CD8-positive, alpha-beta T cell (primary cell): ENCODE measurements at regions of chr19 and their contacts with region 1.

Region 1: GRCh38 chr19:12736995-12737834 is at the start of gene GET3:
- DNase-seq: peak; percentile 59 to 94 (median 82)
- ATAC-seq: peak; percentile 78
- H3K4me3 ChIP-seq: peak within 1 kb of the TSS; percentile 70 to 81
- H3K4me3 Mint-ChIP-seq: peak within 1 kb of the TSS; percentile 99
- H3K27ac ChIP-seq: peak within 1 kb of the TSS; percentile 70 to 87
- H3K27ac Mint-ChIP-seq: peak within 1 kb of the TSS; percentile 92
- H3K4me1 ChIP-seq: peaks cover 39% of the 10 kb centered on the region
- H3K4me1 Mint-ChIP-seq: peaks cover 41% of the 10 kb centered on the region
- H3K27me3 ChIP-seq: no peaks in the 10 kb centered on the region
- H3K27me3 Mint-ChIP-seq: no peaks in the 10 kb centered on the region
- CTCF ChIP-seq: no peak
- total RNA-seq, gene GET3: 17.6 to 19.8 TPM

Region 2: GRCh38 chr19:12666265-12667048 is 70.8 kb before region 1 on chr19 and contains the starts of genes MAN2B1 and WDR83:
- CTCF ChIA-PET with region 1: no interaction called
- POLR2A ChIA-PET with region 1: no interaction called
- intact Hi-C with region 1: loop called in 1 of 2 experiments (anchors 5 kb)
- DNase-seq: peak; percentile 57 to 92 (median 77)
- ATAC-seq: peak; percentile 72
- H3K4me3 ChIP-seq: peak within 1 kb of the TSS; percentile 82 to 84
- H3K4me3 Mint-ChIP-seq: peak within 1 kb of the TSS; percentile 90
- H3K27ac ChIP-seq: peak within 1 kb of the TSS; percentile 69 to 99
- H3K27ac Mint-ChIP-seq: peak within 1 kb of the TSS; percentile 94
- H3K4me1 ChIP-seq: peaks cover 46% of the 10 kb centered on the region
- H3K4me1 Mint-ChIP-seq: peaks cover 54% of the 10 kb centered on the region
- H3K27me3 ChIP-seq: no peaks in the 10 kb centered on the region
- H3K27me3 Mint-ChIP-seq: no peaks in the 10 kb centered on the region
- CTCF ChIP-seq: no peak
- total RNA-seq, gene MAN2B1: 74.8 to 82.2 TPM
- total RNA-seq, gene WDR83: 7.4 to 10.0 TPM

Region 3: DNA sequence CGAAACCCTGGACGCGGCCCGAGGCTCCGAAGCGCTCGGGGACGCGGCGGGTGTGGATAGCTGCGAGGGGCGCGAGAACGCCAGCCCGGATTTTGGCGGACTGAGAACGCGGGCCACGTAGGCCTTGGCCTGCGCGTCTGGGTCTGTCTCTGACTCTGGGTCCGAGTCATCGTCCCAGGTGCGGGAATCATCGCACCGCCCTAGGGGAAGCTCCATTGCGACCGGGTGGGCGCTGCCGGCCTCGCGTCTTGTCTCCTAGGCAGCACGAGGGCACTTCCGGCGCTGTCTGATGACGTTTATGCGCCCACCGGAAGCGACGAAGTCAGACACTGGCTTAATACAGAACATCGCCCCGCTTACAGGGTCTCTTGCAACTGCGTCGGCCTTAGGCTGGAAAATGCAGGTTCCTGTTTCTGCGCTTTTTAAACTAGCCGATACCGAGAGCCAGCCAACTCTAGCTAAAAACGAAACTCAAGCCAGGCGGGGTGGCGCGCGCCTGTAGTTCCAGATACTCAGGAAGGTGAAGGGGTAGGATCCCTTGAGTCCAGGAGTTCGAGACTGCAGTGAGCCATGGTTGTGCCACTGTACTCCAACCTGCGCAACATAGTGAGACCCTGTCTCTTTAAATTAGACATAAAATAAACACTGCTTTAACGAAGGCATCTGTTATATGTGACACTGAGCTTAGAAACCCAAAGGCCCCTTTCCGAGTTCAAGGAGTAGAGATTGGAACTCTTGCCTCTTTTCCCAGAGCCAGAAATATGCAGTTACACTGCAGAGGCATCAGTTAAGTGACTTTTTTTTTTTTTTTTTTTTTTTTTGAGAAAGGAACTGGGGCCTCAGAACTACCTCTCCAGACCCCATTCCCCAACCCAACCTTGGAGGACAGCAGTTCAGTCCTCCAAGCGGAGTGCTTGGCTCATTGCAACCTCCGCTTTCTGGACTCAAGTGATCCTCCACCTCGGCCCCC is 40.6 kb before region 1 on chr19 and contains the start of gene FBXW9:
- CTCF ChIA-PET with region 1: no interaction called
- POLR2A ChIA-PET with region 1: interaction called, 6 read pairs
- intact Hi-C with region 1: loop called in 1 of 2 experiments (anchors 1 kb)
- DNase-seq: peak; percentile 95 to 99 (median 98)
- ATAC-seq: peak; percentile 92
- H3K4me3 ChIP-seq: peak within 1 kb of the TSS; percentile 88 to 89
- H3K4me3 Mint-ChIP-seq: peak within 1 kb of the TSS; percentile 90
- H3K27ac ChIP-seq: peak within 1 kb of the TSS; percentile 87 to 91
- H3K27ac Mint-ChIP-seq: peak within 1 kb of the TSS; percentile 97
- H3K4me1 ChIP-seq: peaks cover 14% of the 10 kb centered on the region
- H3K4me1 Mint-ChIP-seq: peaks cover 11% of the 10 kb centered on the region
- H3K27me3 ChIP-seq: no peaks in the 10 kb centered on the region
- H3K27me3 Mint-ChIP-seq: no peaks in the 10 kb centered on the region
- CTCF ChIP-seq: no peak
- total RNA-seq, gene FBXW9: 2.3 to 2.8 TPM

Region 4: GRCh38 chr19:12757544-12758274 is 20.5 kb after region 1 on chr19:
- CTCF ChIA-PET with region 1: interaction called, 126 read pairs
- POLR2A ChIA-PET with region 1: interaction called, 3 read pairs
- intact Hi-C with region 1: loop called in 1 of 2 experiments (anchors 1 kb)
- DNase-seq: peak; percentile 32 to 74 (median 49)
- ATAC-seq: peak; percentile 78
- H3K4me3 ChIP-seq: no peak overlapping the region
- H3K4me3 Mint-ChIP-seq: peak overlapping the region; percentile 18
- H3K27ac ChIP-seq: no peak overlapping the region
- H3K27ac Mint-ChIP-seq: no peak overlapping the region
- H3K4me1 ChIP-seq: peaks cover 7% of the 10 kb centered on the region
- H3K4me1 Mint-ChIP-seq: peaks cover 6% of the 10 kb centered on the region
- H3K27me3 ChIP-seq: peaks cover 3 to 4% of the 10 kb centered on the region in 2 experiments
- H3K27me3 Mint-ChIP-seq: peaks cover 16% of the 10 kb centered on the region
- CTCF ChIP-seq: peak; percentile 93

Region 5: DNA sequence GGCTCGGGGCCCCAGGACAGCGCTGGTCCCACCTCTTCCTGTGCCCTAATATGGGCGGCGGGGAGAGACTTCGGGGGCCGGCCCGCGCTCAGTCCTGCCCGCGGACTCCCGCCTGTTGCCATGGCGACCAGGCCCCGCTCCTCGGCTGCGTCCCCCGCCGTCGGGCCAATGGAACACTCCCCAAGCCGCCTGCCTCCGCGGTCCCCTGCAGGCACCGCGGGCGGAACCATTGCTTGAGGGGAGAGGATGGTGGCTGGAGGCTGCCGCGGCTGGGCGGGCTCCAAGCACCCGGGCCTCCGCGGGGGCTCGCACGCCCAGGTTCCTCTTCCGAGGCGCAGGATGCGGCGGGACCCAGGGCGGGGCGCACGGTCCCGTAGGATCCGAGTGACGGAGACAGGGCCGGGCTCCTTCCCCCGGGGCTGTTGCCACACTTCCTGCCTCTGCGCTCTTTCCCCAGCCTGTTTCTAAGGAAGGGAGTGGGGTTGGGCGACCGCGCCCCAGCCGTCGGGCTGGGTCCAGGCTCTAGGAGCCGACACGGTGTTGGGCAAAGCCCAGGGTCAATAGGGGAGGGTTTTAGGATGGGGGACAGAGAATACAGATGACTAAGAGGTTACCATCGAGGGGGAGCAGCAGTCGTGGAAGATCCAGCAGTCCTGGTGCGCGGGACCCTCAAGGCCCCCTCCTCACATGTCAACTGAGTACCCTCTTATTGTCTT is 52.8 kb after region 1 on chr19:
- CTCF ChIA-PET with region 1: interaction called, 12 read pairs
- POLR2A ChIA-PET with region 1: interaction called, 27 read pairs
- intact Hi-C with region 1: loop called in 1 of 2 experiments (anchors 1 kb)
- DNase-seq: peak; percentile 84 to 98 (median 91)
- ATAC-seq: peak; percentile 29
- H3K4me3 ChIP-seq: peak overlapping the region; percentile 86 to 100
- H3K4me3 Mint-ChIP-seq: peak overlapping the region; percentile 93
- H3K27ac ChIP-seq: peak overlapping the region; percentile 100
- H3K27ac Mint-ChIP-seq: peak overlapping the region; percentile 97
- H3K4me1 ChIP-seq: peaks cover 47% of the 10 kb centered on the region
- H3K4me1 Mint-ChIP-seq: peaks cover 37% of the 10 kb centered on the region
- H3K27me3 ChIP-seq: no peaks in the 10 kb centered on the region
- H3K27me3 Mint-ChIP-seq: no peaks in the 10 kb centered on the region
- CTCF ChIP-seq: no peak

Region 6: GRCh38 chr19:12806239-12807081 is 69.2 kb after region 1 on chr19 and contains the start of gene RNASEH2A:
- CTCF ChIA-PET with region 1: interaction called, 3 read pairs
- POLR2A ChIA-PET with region 1: interaction called, 4 read pairs
- intact Hi-C with region 1: loop called (anchors 1 kb)
- DNase-seq: peak; percentile 66 to 93 (median 85)
- ATAC-seq: peak; percentile 92
- H3K4me3 ChIP-seq: peak within 1 kb of the TSS; percentile 60 to 68
- H3K4me3 Mint-ChIP-seq: peak within 1 kb of the TSS; percentile 92
- H3K27ac ChIP-seq: peak within 1 kb of the TSS; percentile 54 to 63
- H3K27ac Mint-ChIP-seq: peak within 1 kb of the TSS; percentile 78
- H3K4me1 ChIP-seq: peaks cover 18% of the 10 kb centered on the region
- H3K4me1 Mint-ChIP-seq: peaks cover 26% of the 10 kb centered on the region
- H3K27me3 ChIP-seq: no peaks in the 10 kb centered on the region
- H3K27me3 Mint-ChIP-seq: no peaks in the 10 kb centered on the region
- CTCF ChIP-seq: no peak
- total RNA-seq, gene RNASEH2A: 1.3 to 2.2 TPM

Region 7: DNA sequence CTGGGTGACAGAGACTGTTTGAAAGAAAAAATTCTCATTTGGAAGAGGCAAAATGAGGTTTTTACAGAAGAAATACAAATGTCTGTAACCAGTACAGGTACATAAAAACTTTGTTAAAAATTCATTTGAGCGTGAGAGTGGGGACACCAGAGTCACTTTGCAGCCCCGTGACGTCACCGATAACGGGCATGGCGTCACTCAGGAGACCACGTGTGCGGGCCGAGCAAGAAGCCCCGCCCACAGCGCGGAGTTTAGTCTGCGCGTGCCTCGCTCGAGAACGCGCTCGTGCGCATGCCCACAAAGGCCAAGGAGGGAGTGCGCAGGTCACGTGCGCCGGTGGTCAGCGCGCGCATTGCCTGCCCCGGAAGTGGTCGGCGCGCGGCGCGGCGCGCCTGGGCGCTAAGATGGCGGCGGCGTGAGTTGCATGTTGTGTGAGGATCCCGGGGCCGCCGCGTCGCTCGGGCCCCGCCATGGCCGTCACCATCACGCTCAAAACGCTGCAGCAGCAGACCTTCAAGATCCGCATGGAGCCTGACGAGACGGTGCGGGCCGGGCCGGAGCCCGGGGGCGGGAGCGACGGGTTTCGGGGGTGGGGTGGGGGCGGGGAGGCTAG is 208.4 kb after region 1 on chr19 and contains the start of gene RAD23A:
- CTCF ChIA-PET with region 1: no interaction called
- POLR2A ChIA-PET with region 1: no interaction called
- intact Hi-C with region 1: loop called in 1 of 2 experiments (anchors 1 kb)
- DNase-seq: peak; percentile 97 to 100 (median 98)
- ATAC-seq: peak; percentile 86
- H3K4me3 ChIP-seq: peak within 1 kb of the TSS; percentile 60 to 64
- H3K4me3 Mint-ChIP-seq: peak within 1 kb of the TSS; percentile 91
- H3K27ac ChIP-seq: peak within 1 kb of the TSS; percentile 67 to 83
- H3K27ac Mint-ChIP-seq: peak within 1 kb of the TSS; percentile 96
- H3K4me1 ChIP-seq: peaks cover 35% of the 10 kb centered on the region
- H3K4me1 Mint-ChIP-seq: peaks cover 43% of the 10 kb centered on the region
- H3K27me3 ChIP-seq: no peaks in the 10 kb centered on the region
- H3K27me3 Mint-ChIP-seq: no peaks in the 10 kb centered on the region
- CTCF ChIP-seq: no peak
- total RNA-seq, gene RAD23A: 86.3 to 90.8 TPM